ENCODE measurements at regions of chr19 and their contacts with region 1.

Region 1: GRCh38 chr19:8731428-8732169 is 10.2 kb downstream of the OR2Z1 start:
- DNase-seq: peak; percentile 6
- H3K4me3 ChIP-seq: no peak overlapping the region
- H3K27ac ChIP-seq: no peak overlapping the region
- H3K4me1 ChIP-seq: no peaks in the 10 kb centered on the region
- H3K27me3 ChIP-seq: no peaks in the 10 kb centered on the region
- CTCF ChIP-seq: no peak

Region 2: GRCh38 chr19:9018163-9018875 is 286.7 kb after region 1 on chr19:
- CTCF ChIA-PET with region 1: no interaction called
- POLR2A ChIA-PET with region 1: interaction called, 16 read pairs
- intact Hi-C with region 1: no loop called
- DNase-seq: no peak
- H3K4me3 ChIP-seq: no peak overlapping the region
- H3K27ac ChIP-seq: no peak overlapping the region
- H3K4me1 ChIP-seq: no peaks in the 10 kb centered on the region
- H3K27me3 ChIP-seq: peaks cover 11% of the 10 kb centered on the region
- CTCF ChIP-seq: no peak

Measured in A673 (cell line).